Naive thymus-derived CD4-positive, alpha-beta T cell (primary cell): ENCODE measurements at regions of chr4 and their contacts with region 1.

Region 1: DNA sequence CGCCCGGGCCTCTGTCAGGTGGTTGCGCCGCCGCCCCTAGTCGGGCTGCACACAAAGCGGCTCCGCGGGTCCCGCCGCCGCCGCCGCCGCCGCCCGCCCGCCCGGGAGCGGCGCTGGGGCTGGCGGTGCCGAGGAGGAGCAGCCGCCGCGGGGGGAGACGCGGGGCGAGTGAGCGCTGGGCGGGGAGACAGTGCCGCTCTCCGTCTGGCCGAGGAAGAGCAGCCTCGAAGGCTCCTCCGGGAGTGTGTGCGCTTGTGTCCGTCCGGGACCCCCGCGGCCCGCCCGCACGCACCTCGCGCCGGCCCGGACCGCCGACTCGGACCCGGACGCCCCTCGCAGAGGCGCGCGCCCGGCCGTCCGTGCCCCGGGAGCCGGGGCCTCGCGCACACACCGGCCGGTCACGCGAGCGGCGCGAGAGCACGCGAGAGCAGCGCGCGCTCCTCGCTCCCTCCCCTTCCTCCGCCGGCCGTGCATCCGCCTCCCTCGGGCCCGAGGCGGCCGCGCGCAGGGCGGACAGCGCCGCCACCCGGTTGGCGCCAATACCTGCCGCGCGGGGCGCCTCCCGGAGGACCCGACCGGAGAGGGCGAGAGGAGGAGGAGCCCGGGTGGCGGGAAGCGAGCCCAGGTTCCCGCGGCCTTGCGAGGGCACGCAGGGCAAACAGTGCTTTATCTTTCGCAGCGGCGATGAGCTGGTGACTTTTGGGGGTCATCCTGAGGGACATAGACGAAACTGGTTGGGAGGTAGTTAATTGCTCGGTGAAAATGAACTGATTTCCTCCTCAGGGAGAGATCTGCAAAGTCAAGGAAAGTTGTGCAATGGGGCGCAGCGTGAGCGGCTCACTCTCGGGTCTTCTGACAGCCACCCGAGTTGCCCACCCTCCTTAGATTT is at the start of gene PDS5A:
- DNase-seq: peak; percentile 83 to 95 (median 91)
- ATAC-seq: peak; percentile 94
- H3K4me3 ChIP-seq: peak within 1 kb of the TSS; percentile 78
- H3K4me3 Mint-ChIP-seq: peak within 1 kb of the TSS; percentile 87 to 99 (median 91)
- H3K27ac ChIP-seq: peak within 1 kb of the TSS; percentile 89
- H3K27ac Mint-ChIP-seq: peak within 1 kb of the TSS; percentile 91 to 98 (median 96)
- H3K4me1 ChIP-seq: peaks cover 3 to 18% of the 10 kb centered on the region in 2 donors
- H3K4me1 Mint-ChIP-seq: peaks cover 28 to 43% (median 31%) of the 10 kb centered on the region in 7 donors
- H3K27me3 ChIP-seq: no peaks in the 10 kb centered on the region
- H3K27me3 Mint-ChIP-seq: no peaks in the 10 kb centered on the region
- total RNA-seq, gene PDS5A: 92.7 to 102 (median 98.5) TPM

Region 2: GRCh38 chr4:39181905-39182638 is 795.7 kb before region 1 on chr4 and contains the start of gene WDR19:
- CTCF ChIA-PET with region 1: no interaction called
- POLR2A ChIA-PET with region 1: no interaction called
- intact Hi-C with region 1: loop called (anchors 1 to 2 kb)
- DNase-seq: peak; percentile 91 to 98 (median 98)
- ATAC-seq: peak; percentile 98
- H3K4me3 ChIP-seq: peak within 1 kb of the TSS; percentile 91
- H3K4me3 Mint-ChIP-seq: no peak within 1 kb of the TSS
- H3K27ac ChIP-seq: peak within 1 kb of the TSS; percentile 72
- H3K27ac Mint-ChIP-seq: peak within 1 kb of the TSS in 4 of 9 donors; percentile 8 to 47 (median 21)
- H3K4me1 ChIP-seq: peaks cover 3 to 12% of the 10 kb centered on the region in 2 donors
- H3K4me1 Mint-ChIP-seq: peaks cover 0 to 12% (median 9%) of the 10 kb centered on the region in 7 donors
- H3K27me3 ChIP-seq: no peaks in the 10 kb centered on the region
- H3K27me3 Mint-ChIP-seq: peaks cover 0 to 16% (median 3%) of the 10 kb centered on the region in 5 donors
- total RNA-seq, gene WDR19: 14.0 to 44.3 (median 15.4) TPM

Region 3: GRCh38 chr4:39469429-39470077 is 508.2 kb before region 1 on chr4:
- CTCF ChIA-PET with region 1: interaction called, 13 read pairs
- POLR2A ChIA-PET with region 1: interaction called, 3 read pairs
- intact Hi-C with region 1: loop called (anchors 1 kb)
- DNase-seq: peak in 7 of 9 donors; percentile 36 to 60 (median 47)
- ATAC-seq: peak; percentile 98
- H3K4me3 ChIP-seq: no peak overlapping the region
- H3K4me3 Mint-ChIP-seq: no peak overlapping the region
- H3K27ac ChIP-seq: no peak overlapping the region
- H3K27ac Mint-ChIP-seq: peak overlapping the region in 6 of 9 donors; percentile 24 to 62 (median 44)
- H3K4me1 ChIP-seq: no peaks in the 10 kb centered on the region
- H3K4me1 Mint-ChIP-seq: peaks cover 0 to 15% (median 4%) of the 10 kb centered on the region in 7 donors
- H3K27me3 ChIP-seq: no peaks in the 10 kb centered on the region
- H3K27me3 Mint-ChIP-seq: no peaks in the 10 kb centered on the region

Region 4: DNA sequence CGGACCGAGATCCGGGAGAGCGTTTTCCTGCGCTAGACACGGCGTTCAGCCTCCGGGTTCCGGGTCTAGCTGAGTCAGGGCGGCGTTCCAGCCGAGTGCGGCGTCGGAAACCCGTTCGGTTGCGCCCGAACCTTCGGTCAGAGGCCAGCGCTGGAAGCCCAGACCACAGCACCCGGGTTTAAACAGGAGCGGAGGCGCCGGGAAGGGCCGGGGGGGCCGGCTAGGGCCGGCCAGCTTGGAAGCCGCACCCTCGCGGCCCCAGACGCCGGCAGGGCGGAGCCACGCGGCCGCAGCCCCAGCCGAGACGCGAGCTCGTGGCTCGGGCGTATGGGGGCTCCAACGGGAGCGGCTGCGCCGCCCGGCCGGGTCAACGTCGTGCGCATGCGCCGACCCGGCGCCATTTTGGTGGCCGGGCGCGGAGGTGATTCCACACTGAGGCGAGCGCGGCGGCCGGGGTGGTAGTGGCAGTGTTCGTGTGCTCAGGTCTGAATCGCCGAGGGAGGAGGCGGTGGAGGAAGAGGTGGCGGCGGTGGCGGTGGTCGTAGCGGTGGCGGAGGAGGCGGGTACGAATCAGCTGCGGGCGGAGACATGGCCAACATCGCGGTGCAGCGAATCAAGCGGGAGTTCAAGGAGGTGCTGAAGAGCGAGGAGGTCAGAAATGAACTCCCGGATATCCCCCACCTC is 279.9 kb before region 1 on chr4 and contains the start of gene UBE2K:
- CTCF ChIA-PET with region 1: interaction called, 6 read pairs
- POLR2A ChIA-PET with region 1: interaction called, 6 read pairs
- intact Hi-C with region 1: loop called (anchors 1 kb)
- DNase-seq: peak; percentile 82 to 97 (median 91)
- ATAC-seq: peak; percentile 93
- H3K4me3 ChIP-seq: peak within 1 kb of the TSS; percentile 94
- H3K4me3 Mint-ChIP-seq: peak within 1 kb of the TSS; percentile 95 to 100 (median 98)
- H3K27ac ChIP-seq: peak within 1 kb of the TSS; percentile 98
- H3K27ac Mint-ChIP-seq: peak within 1 kb of the TSS; percentile 96 to 99 (median 97)
- H3K4me1 ChIP-seq: peaks cover 17 to 22% of the 10 kb centered on the region in 2 donors
- H3K4me1 Mint-ChIP-seq: peaks cover 19 to 53% (median 37%) of the 10 kb centered on the region in 7 donors
- H3K27me3 ChIP-seq: no peaks in the 10 kb centered on the region
- H3K27me3 Mint-ChIP-seq: no peaks in the 10 kb centered on the region
- total RNA-seq, gene UBE2K: 31.1 to 85.0 (median 43.7) TPM

Region 5: GRCh38 chr4:39908284-39908683 is 69.4 kb before region 1 on chr4:
- CTCF ChIA-PET with region 1: no interaction called
- POLR2A ChIA-PET with region 1: no interaction called
- intact Hi-C with region 1: loop called in 1 of 2 experiments (anchors 5 kb)
- DNase-seq: no peak
- ATAC-seq: no peak
- H3K4me3 ChIP-seq: no peak overlapping the region
- H3K4me3 Mint-ChIP-seq: no peak overlapping the region
- H3K27ac ChIP-seq: no peak overlapping the region
- H3K27ac Mint-ChIP-seq: no peak overlapping the region
- H3K4me1 ChIP-seq: no peaks in the 10 kb centered on the region
- H3K4me1 Mint-ChIP-seq: peaks cover 0 to 3% (median 0%) of the 10 kb centered on the region in 7 donors
- H3K27me3 ChIP-seq: no peaks in the 10 kb centered on the region
- H3K27me3 Mint-ChIP-seq: no peaks in the 10 kb centered on the region

Region 6: DNA sequence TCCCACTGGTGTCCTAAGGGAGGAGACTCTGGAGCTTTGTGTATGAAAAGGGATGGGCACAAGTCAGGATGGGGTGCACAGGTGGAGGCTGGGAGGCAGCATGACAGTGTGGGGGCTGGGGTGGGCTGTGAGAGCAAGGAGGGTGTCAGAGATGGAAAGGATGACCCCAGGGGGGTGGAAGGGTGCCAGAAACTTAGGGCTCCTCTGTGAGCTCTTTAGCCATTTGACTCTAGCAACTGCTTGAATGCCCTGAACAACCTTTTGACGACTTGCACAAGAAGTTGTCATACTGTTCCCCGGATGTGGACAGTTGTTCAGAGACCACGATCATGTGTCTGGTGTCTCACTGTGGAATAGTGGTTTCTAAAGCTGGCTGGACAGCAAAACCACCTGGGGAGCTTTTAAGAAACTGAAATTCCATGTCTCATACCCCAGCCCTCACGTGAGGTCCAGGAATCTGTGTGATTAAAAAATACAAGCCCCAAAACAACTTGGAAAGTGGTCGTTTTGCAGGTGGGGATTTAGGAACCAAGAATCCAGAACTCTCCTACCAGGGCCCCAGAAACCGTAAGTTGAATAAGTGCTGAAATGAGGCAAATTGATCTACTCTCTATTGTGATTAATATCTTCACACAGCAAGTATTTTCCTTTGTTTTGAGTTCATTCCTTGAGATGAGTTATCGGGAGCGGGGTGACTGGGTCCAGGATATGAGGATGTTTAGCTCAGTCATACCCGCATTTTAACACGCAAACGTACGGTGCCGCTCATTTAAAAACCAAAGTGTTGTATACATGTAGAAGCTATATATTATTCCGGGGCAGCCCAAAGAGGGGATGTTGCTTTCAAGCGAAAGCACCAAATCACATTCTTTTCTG is 222.5 kb after region 1 on chr4:
- CTCF ChIA-PET with region 1: no interaction called
- POLR2A ChIA-PET with region 1: no interaction called
- intact Hi-C with region 1: loop called in 1 of 2 experiments (anchors 5 kb)
- DNase-seq: peak in 8 of 9 donors; percentile 51 to 73 (median 61)
- ATAC-seq: peak; percentile 42
- H3K4me3 ChIP-seq: peak overlapping the region; percentile 96
- H3K4me3 Mint-ChIP-seq: peak overlapping the region; percentile 96 to 100 (median 99)
- H3K27ac ChIP-seq: peak overlapping the region; percentile 100
- H3K27ac Mint-ChIP-seq: peak overlapping the region; percentile 98 to 100 (median 99)
- H3K4me1 ChIP-seq: peaks cover 19 to 20% of the 10 kb centered on the region in 2 donors
- H3K4me1 Mint-ChIP-seq: peaks cover 37 to 54% (median 44%) of the 10 kb centered on the region in 7 donors
- H3K27me3 ChIP-seq: no peaks in the 10 kb centered on the region
- H3K27me3 Mint-ChIP-seq: peaks cover 0 to 5% (median 0%) of the 10 kb centered on the region in 5 donors

Region 7: DNA sequence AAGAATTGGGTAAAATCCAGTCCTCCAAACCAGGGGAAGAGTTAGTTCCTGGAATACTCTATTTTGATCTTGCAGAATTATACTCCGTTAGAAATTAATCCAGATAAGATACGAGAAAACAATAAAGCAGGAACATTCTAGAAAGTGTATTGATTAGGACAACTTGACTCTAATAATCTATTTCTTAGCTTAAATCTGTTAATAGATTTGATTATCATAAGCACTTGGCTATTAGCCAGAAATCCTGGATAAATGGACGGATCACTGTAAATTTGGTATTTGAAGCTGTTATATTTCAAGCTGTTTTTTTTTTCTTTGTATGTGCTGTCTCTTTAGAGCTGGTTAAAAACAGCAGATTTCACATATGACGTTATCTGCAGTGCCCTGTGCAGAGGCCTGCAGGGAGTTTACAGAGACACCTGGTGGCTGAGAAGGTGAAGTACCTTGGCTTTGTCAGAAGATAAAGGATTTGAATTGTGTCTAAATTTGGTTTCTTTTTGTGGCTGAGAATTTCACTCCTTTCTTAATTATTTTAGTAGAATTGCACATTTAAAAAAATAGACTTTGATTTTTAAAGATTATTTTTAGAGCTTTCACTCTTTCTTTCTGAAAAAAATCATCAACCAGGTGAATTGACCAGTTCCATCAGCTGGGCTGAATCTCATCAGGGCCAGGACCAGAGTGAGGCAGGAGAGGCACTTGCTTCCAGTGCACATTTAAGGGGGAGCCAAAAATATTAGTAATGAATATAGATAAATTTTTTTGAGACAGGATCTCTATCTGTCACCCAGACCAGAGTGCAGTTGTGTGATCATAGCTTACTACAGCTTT is 347.7 kb after region 1 on chr4:
- CTCF ChIA-PET with region 1: interaction called, 6 read pairs
- POLR2A ChIA-PET with region 1: interaction called, 4 read pairs
- intact Hi-C with region 1: loop called (anchors 1 kb)
- DNase-seq: peak in 7 of 9 donors; percentile 70 to 85 (median 82)
- ATAC-seq: peak; percentile 100
- H3K4me3 ChIP-seq: no peak overlapping the region
- H3K4me3 Mint-ChIP-seq: peak overlapping the region in 4 of 10 donors; percentile 0 to 48 (median 14)
- H3K27ac ChIP-seq: peak overlapping the region; percentile 45
- H3K27ac Mint-ChIP-seq: peak overlapping the region in 8 of 9 donors; percentile 25 to 87 (median 64)
- H3K4me1 ChIP-seq: peaks cover 0 to 8% of the 10 kb centered on the region in 2 donors
- H3K4me1 Mint-ChIP-seq: peaks cover 13 to 40% (median 35%) of the 10 kb centered on the region in 7 donors
- H3K27me3 ChIP-seq: no peaks in the 10 kb centered on the region
- H3K27me3 Mint-ChIP-seq: peaks cover 0 to 7% (median 4%) of the 10 kb centered on the region in 5 donors